ENCODE measurements at regions of chr17 and their contacts with region 1.

Region 1: GRCh38 chr17:12622721-12623120 is 43.0 kb upstream of the MYOCD start:
- DNase-seq: peak; percentile 39 to 71 (median 47)
- H3K4me3 ChIP-seq: no peak overlapping the region
- H3K27ac ChIP-seq: peak overlapping the region in 1 of 2 donors; percentile 10
- H3K4me1 ChIP-seq: peaks cover 16% of the 10 kb centered on the region
- H3K27me3 ChIP-seq: no peaks in the 10 kb centered on the region
- CTCF ChIP-seq: no peak
- EP300 ChIP-seq: peak; percentile 32
- POLR2A ChIP-seq: no peak

Region 2: GRCh38 chr17:12637745-12638651 is 15.3 kb after region 1 on chr17:
- intact Hi-C with region 1: loop called in 1 of 4 experiments (anchors 1 kb)
- DNase-seq: no peak
- H3K4me3 ChIP-seq: no peak overlapping the region
- H3K27ac ChIP-seq: no peak overlapping the region
- H3K4me1 ChIP-seq: peaks cover 5% of the 10 kb centered on the region
- H3K27me3 ChIP-seq: no peaks in the 10 kb centered on the region
- CTCF ChIP-seq: no peak
- EP300 ChIP-seq: no peak
- POLR2A ChIP-seq: no peak

Measured in ovary (tissue), 10 donors.